MCF 10A (cell line): ENCODE measurements at regions of chr3 and their contacts with region 1.

Region 1: GRCh38 chr3:120742198-120742849 is at the starts of genes GTF2E1 and RABL3:
- DNase-seq: peak; percentile 99
- H3K4me3 Mint-ChIP-seq: peak within 1 kb of the TSS; percentile 99
- H3K27ac Mint-ChIP-seq: peak within 1 kb of the TSS; percentile 99
- H3K4me1 Mint-ChIP-seq: peaks cover 18% of the 10 kb centered on the region
- H3K27me3 Mint-ChIP-seq: no peaks in the 10 kb centered on the region
- CTCF ChIP-seq: no peak
- total RNA-seq, gene GTF2E1: 18.0 and 21.6 TPM in 2 replicates
- total RNA-seq, gene RABL3: 21.8 and 26.0 TPM in 2 replicates

Region 2: DNA sequence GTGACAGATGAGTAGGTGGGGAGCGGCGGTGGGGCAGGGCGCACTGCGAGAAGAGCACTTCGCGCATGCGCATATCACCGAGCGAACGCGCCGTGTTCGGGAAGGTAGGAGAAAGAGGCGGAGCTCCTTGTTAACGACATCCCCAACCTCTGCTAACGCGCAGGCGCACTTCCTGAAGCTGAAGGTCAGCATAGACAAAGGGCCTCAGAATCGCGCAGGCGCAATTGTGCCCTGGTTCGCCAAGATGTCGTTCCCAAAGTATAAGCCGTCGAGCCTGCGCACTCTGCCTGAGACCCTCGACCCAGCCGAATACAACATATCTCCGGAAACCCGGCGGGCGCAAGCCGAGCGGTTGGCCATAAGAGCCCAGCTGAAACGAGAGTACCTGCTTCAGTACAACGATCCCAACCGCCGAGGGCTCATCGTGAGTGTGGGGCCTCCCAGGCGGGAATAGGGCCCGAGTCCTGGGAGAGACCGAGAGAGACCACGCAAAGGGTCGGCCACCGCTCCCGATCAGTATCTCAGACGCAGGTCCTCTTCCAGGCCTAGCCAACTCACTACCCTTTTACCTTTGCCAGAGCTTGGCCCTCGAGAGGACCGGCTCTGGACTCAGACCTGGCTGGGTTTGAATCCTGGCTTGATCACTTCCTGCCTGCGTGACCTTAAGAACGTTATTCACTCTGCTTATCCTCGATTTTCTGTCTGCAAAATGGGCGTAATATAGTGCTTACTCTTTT is 146.0 kb before region 1 on chr3 and contains the start of gene NDUFB4:
- CTCF ChIA-PET with region 1: interaction called, 3 read pairs
- POLR2A ChIA-PET with region 1: interaction called, 38 read pairs
- intact Hi-C with region 1: no loop called
- DNase-seq: peak; percentile 99
- H3K4me3 Mint-ChIP-seq: peak within 1 kb of the TSS; percentile 92
- H3K27ac Mint-ChIP-seq: peak within 1 kb of the TSS; percentile 95
- H3K4me1 Mint-ChIP-seq: peaks cover 5% of the 10 kb centered on the region
- H3K27me3 Mint-ChIP-seq: peaks cover 11% of the 10 kb centered on the region
- CTCF ChIP-seq: no peak
- total RNA-seq, gene NDUFB4: 96.1 and 113 TPM in 2 replicates

Region 3: DNA sequence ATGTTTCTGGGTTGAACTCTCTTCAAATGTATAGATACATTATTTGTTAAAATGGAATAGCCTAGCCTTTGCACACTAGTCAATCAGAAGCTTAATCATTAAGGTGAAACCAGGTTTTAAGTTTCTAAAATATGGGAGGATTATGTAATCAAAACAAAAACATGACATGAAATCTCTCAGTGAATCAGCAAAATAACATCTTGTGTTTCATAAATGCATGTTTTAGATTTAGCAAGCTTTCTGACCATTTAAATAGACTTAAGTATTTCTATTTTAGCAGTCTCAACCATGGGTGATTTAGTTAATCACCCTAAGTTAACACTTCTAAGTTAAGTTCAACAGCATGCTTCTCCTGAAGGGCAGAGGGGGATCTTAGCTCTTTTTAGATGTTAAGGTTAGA is 11.5 kb after region 1 on chr3:
- CTCF ChIA-PET with region 1: interaction called, 4 read pairs
- POLR2A ChIA-PET with region 1: interaction called, 35 read pairs
- intact Hi-C with region 1: no loop called
- DNase-seq: peak; percentile 24
- H3K4me3 Mint-ChIP-seq: no peak overlapping the region
- H3K27ac Mint-ChIP-seq: peak overlapping the region; percentile 77
- H3K4me1 Mint-ChIP-seq: peaks cover 7% of the 10 kb centered on the region
- H3K27me3 Mint-ChIP-seq: no peaks in the 10 kb centered on the region
- CTCF ChIP-seq: no peak